ENCODE measurements at regions of chr12 and their contacts with region 1.

Region 1: DNA sequence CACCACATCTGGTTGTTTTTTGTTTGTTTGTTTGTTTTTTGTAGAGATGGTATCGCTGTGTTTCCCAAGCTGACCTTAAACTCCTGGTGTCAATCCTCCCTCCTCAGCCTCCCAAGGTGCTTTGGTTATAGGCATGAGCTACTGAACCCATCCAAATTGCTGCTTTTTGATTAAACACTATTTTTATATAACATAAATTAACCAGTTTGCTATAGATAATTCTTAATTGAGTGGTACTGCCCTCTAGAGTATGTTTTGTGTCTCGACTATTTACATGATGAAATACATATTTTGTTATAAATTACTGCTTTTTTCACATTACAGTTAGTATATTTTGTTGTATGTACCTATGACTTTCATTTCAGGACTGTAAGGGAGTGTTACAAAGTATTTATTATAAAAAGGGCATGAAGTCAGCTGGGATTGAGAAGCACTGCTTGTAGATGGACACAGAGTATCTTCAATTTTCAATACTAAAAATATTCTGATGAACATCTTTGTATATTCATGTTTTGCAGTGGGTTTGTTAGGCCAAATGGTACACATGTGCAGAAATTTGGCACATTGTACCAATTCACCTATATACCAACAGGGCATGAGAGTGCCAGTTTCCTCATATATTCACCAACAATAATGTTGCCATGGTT is 14.9 kb upstream of the SCAF11 start:
- DNase-seq: no peak
- ATAC-seq: no peak
- H3K4me3 Mint-ChIP-seq: no peak overlapping the region
- H3K27ac Mint-ChIP-seq: no peak overlapping the region
- H3K4me1 Mint-ChIP-seq: no peaks in the 10 kb centered on the region
- H3K27me3 Mint-ChIP-seq: no peaks in the 10 kb centered on the region

Region 2: DNA sequence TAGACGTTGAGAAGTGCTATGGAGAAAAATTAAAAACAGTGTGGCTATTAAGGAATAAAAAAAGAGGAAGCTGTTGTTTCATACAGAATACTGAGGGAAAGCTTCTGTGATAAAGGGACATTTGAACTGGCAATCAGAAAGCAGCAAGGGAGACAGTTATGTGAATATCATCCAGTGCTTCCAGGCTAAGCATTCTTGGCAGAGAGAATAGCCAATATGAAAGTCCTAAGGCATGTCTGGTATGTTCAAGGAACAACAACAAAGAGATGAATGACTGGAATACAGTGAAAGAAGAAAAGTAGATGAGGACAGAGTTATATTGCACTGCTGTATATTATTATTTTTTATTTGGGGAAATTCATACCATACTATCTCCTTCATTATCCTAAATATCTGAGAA is 38.8 kb before region 1 on chr12:
- CTCF ChIA-PET with region 1: no interaction called
- DNase-seq: no peak
- ATAC-seq: no peak
- H3K4me3 Mint-ChIP-seq: no peak overlapping the region
- H3K27ac Mint-ChIP-seq: no peak overlapping the region
- H3K4me1 Mint-ChIP-seq: peaks cover 21% of the 10 kb centered on the region
- H3K27me3 Mint-ChIP-seq: no peaks in the 10 kb centered on the region

Region 3: GRCh38 chr12:45990468-45991283 is 14.6 kb before region 1 on chr12 and contains the start of gene SCAF11:
- CTCF ChIA-PET with region 1: interaction called, 12 read pairs
- DNase-seq: peak; percentile 100
- ATAC-seq: peak; percentile 82
- H3K4me3 Mint-ChIP-seq: peak within 1 kb of the TSS; percentile 91
- H3K27ac Mint-ChIP-seq: peak within 1 kb of the TSS; percentile 97
- H3K4me1 Mint-ChIP-seq: peaks cover 39% of the 10 kb centered on the region
- H3K27me3 Mint-ChIP-seq: peaks cover 2% of the 10 kb centered on the region
- total RNA-seq, gene SCAF11: 131 to 137 TPM

Region 4: GRCh38 chr12:46024099-46024498 is 18.8 kb after region 1 on chr12:
- CTCF ChIA-PET with region 1: no interaction called
- DNase-seq: no peak
- ATAC-seq: no peak
- H3K4me3 Mint-ChIP-seq: no peak overlapping the region
- H3K27ac Mint-ChIP-seq: no peak overlapping the region
- H3K4me1 Mint-ChIP-seq: no peaks in the 10 kb centered on the region
- H3K27me3 Mint-ChIP-seq: peaks cover 31% of the 10 kb centered on the region

Measured in activated CD8-positive, alpha-beta memory T cell treated with anti-CD3 and anti-CD28 coated beads, Interleukin-2, amount 10 ng/mL, durations not matched to agents 7 days and 5 days (primary cell).